ENCODE measurements at regions of chr4 and their contacts with region 1.

Region 1: DNA sequence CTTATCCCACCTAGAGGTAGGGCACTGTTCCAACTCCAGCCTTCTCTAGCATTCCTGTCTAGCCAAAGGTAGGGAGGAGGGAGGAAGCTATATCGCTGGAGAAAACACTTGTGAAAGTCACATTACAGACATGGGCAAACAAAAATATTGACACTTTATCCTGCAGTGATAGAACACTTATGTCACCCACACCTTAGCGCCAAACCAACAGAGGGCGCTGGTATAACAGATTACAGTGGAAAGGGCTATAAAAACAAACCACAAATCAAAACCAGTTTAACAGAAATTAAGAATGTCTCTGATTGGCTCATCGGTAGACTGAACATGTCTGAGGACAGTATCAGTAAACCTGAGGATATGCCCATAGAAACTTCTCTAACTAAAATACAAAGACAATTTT is 451.3 kb downstream of the TLL1 start:
- DNase-seq: no peak
- ATAC-seq: no peak
- H3K4me3 ChIP-seq: no peak overlapping the region
- H3K27ac ChIP-seq: no peak overlapping the region
- H3K4me1 ChIP-seq: no peaks in the 10 kb centered on the region
- H3K27me3 ChIP-seq: no peaks in the 10 kb centered on the region

Region 2: DNA sequence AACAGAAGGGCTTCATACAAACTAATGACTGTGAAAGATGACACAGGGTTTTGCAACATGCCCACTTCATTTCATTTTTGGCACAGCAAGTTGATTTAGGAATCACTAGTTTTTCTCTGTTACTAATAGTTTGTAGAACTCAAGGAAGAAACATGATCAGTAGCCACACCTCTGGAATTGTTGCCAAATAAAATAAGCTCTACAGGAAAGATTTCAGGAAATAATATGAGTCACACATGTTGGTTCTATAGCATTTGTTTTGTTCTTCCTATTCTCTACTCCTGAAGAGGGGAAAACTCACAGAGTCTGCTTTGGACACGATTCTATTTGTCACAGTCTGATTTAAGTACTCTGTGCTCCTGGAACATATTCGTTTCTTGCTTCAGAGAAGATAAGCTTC is 195.9 kb before region 1 on chr4:
- intact Hi-C with region 1: no loop called
- DNase-seq: no peak
- ATAC-seq: no peak
- H3K4me3 ChIP-seq: no peak overlapping the region
- H3K27ac ChIP-seq: no peak overlapping the region
- H3K4me1 ChIP-seq: no peaks in the 10 kb centered on the region
- H3K27me3 ChIP-seq: peaks cover 0 to 2% of the 10 kb centered on the region in 2 donors

Region 3: GRCh38 chr4:166594326-166594946 is 270.1 kb after region 1 on chr4:
- intact Hi-C with region 1: loop called in 1 of 2 experiments (anchors 10 kb)
- DNase-seq: no peak
- ATAC-seq: no peak
- H3K4me3 ChIP-seq: no peak overlapping the region
- H3K27ac ChIP-seq: no peak overlapping the region
- H3K4me1 ChIP-seq: no peaks in the 10 kb centered on the region
- H3K27me3 ChIP-seq: no peaks in the 10 kb centered on the region